ENCODE measurements at regions of chr11 and their contacts with region 1.

Region 1: DNA sequence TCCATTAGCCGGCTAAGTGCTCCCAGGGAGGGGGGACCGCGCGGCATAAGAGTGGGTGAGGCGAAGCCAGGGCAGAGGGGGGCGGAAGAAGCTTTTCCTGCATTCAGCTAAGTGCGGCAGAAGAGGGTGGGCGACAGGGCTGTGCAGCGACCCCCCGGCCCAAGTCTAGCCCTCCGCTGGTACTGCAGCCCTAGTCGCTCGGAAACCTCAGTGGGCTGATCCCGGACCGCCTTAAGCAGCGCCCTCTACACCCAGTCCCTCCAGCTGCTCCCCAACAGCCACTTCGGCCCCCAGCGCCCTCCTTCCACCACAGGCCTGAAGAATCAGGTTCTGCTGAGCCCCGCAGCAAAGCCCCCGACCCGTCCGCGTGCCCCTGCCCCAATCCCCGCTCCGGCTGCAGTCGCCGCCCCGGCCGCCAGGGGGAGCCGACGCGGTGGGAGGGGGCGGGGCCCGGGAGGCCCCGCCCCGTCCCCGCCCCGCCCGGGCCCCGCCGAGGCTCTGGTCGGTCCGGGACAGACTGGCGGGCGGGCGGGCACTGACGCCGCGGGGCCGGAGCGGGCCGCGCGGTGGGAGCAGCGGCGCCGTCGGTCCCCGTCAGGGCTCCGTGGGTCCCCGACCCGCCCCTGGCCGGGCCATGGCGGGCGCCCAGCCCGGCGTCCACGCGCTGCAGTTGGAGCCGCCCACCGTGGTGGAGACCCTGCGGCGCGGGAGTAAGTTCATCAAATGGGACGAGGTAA is at the start of gene PLCB3:
- DNase-seq: peak; percentile 71
- H3K4me3 ChIP-seq: peak within 1 kb of the TSS; percentile 65 to 91 (median 86)
- H3K27ac ChIP-seq: peak within 1 kb of the TSS; percentile 84 to 91 (median 88)
- H3K4me1 ChIP-seq: peaks cover 15 to 42% (median 29%) of the 10 kb centered on the region in 4 donors
- H3K27me3 ChIP-seq: no peaks in the 10 kb centered on the region
- CTCF ChIP-seq: peak; percentile 75 to 93 (median 87)
- EP300 ChIP-seq: no peak
- POLR2A ChIP-seq: peak; percentile 10
- total RNA-seq, gene PLCB3: 64.5 to 115 (median 91.2) TPM

Region 2: DNA sequence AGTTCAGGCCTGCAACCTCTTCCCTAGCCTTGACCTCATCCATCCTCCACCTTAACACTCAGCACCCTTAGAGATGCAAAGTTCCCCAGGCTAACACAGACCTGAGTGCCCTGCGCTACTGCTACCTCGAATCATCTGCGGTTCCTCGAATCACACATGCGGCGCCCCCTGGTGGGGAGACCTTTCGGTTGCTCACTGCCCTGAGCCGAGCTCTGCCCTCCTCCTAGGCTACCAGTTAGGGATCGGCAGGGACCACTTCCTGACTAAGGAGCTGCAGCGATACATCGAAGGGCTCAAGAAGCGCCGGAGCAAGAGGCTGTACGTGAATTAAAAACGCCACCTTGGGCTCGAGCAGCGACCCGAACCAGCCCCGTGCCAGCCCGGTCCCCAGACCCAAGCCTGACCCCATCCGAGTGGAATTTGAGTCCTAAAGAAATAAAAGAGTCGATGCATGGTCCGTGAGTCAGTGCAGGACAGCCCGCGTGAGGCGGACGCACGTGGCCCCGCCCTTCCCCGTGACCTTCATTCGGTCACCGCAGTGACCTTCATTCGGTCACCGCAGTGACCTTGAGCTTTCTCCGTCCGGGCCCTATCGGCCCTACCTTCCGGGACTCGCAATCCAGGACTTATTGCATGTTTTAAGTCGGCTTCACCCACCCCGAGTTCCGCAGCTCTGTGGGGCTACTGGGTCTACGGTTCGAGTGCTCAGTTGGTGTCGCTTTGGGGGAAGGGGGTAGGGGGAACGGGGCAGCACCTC is 53.3 kb after region 1 on chr11:
- in situ Hi-C with region 1: no loop called
- intact Hi-C with region 1: loop called (anchors 5 kb)
- DNase-seq: peak; percentile 97
- H3K4me3 ChIP-seq: peak overlapping the region; percentile 32 to 81 (median 62)
- H3K27ac ChIP-seq: peak overlapping the region; percentile 90 to 99 (median 98)
- H3K4me1 ChIP-seq: peaks cover 18 to 45% (median 40%) of the 10 kb centered on the region in 4 donors
- H3K27me3 ChIP-seq: peaks cover 21% of the 10 kb centered on the region
- CTCF ChIP-seq: peak; percentile 86 to 98 (median 90)
- EP300 ChIP-seq: no peak
- POLR2A ChIP-seq: peak; percentile 69

Measured in transverse colon (tissue), 4 donors.